ENCODE measurements at regions of chr2 and their contacts with region 1.

Region 1: GRCh38 chr2:88503771-88504170 is 51.3 kb upstream of the FOXI3 start:
- DNase-seq: no peak
- ATAC-seq: no peak
- H3K4me3 Mint-ChIP-seq: no peak overlapping the region
- H3K27ac Mint-ChIP-seq: no peak overlapping the region
- H3K4me1 Mint-ChIP-seq: no peaks in the 10 kb centered on the region
- H3K27me3 Mint-ChIP-seq: peaks cover 6% of the 10 kb centered on the region

Region 2: DNA sequence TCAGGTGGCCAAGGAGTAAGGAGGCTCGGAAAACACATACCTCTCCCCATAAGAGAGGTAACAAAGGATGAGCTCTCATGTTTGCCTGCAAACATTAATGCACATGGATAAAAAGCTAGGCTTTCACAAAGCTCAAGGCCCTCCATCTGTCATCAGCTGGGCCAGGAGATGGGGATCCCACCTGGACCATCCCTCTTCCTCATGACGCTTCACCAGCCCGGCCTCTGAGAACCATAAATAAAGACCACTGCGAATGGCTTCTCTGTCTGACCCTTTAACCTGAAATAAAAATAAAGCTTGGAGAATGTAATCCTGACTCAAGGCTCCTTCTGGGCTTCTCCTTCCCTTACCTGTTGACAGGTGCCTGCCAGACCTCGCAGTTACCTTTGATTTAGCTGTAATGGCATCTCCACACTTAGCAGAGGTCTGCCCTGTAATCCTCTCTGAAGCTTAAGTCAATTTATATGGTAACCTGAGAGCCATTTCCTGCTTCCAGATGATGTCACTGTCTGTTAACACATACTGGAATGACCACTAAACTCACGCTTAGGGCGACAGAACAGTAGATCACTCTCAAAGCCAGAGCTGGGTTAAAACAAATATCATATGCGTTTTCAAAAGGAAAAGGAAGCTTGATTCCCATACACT is 22.0 kb before region 1 on chr2:
- CTCF ChIA-PET with region 1: no interaction called
- POLR2A ChIA-PET with region 1: interaction called, 11 read pairs
- intact Hi-C with region 1: no loop called
- DNase-seq: no peak
- ATAC-seq: no peak
- H3K4me3 Mint-ChIP-seq: no peak overlapping the region
- H3K27ac Mint-ChIP-seq: no peak overlapping the region
- H3K4me1 Mint-ChIP-seq: no peaks in the 10 kb centered on the region
- H3K27me3 Mint-ChIP-seq: peaks cover 13% of the 10 kb centered on the region

Region 3: DNA sequence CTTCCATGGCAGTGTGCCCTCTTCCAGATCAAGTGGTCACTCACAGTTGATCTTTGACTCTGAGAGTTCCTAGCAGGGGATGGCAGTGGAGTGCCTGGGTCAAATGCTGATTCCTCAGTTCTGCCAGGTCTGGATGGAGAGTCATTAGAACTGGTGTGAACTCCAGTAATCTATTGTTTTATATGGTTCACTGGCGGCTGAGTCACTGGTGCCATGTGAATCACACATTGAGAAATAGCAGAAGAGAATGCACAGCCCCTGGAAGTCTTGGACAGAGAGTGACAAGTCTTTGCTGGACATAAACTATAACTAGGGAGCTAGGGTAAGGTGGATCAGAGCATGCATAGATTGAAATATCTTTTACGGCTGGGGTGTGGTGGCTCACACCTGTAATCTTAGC is 36.6 kb after region 1 on chr2:
- CTCF ChIA-PET with region 1: no interaction called
- POLR2A ChIA-PET with region 1: no interaction called
- intact Hi-C with region 1: no loop called
- DNase-seq: no peak
- ATAC-seq: no peak
- H3K4me3 Mint-ChIP-seq: no peak overlapping the region
- H3K27ac Mint-ChIP-seq: no peak overlapping the region
- H3K4me1 Mint-ChIP-seq: no peaks in the 10 kb centered on the region
- H3K27me3 Mint-ChIP-seq: peaks cover 18% of the 10 kb centered on the region

Measured in activated CD4-positive, alpha-beta T cell treated with anti-CD3 and anti-CD28 coated beads for 36 hours (primary cell).